Breast epithelium (tissue), 4 donors: ENCODE measurements at regions of chr11 and their contacts with region 1.

Region 1: GRCh38 chr11:29656597-29656996 is 360.2 kb downstream of the KCNA4 start:
- DNase-seq: no peak
- H3K4me3 ChIP-seq: no peak overlapping the region
- H3K27ac ChIP-seq: no peak overlapping the region
- H3K4me1 ChIP-seq: no peaks in the 10 kb centered on the region
- H3K27me3 ChIP-seq: no peaks in the 10 kb centered on the region
- CTCF ChIP-seq: no peak
- POLR2A ChIP-seq: no peak

Region 2: DNA sequence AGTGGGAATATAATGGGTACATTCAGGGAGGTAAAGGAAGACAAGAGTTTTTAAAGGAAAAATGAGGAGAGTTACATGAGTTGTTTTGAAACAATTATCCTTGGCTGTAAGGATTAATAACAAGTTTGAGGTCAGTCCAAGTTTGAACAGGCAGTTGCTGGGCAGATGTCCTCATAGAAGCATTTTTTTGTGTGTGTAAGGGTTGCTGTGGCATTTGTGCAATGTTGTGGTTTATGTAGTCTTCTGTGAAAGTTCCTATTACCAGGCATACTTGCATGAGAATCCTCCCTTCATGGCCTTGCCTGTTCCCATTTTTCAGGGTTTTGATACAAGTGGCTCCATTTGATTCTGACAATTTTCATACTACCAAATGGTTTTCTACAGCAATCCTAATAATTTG is 40.0 kb before region 1 on chr11:
- intact Hi-C with region 1: loop called (anchors 2 kb)
- DNase-seq: no peak
- H3K4me3 ChIP-seq: no peak overlapping the region
- H3K27ac ChIP-seq: no peak overlapping the region
- H3K4me1 ChIP-seq: no peaks in the 10 kb centered on the region
- H3K27me3 ChIP-seq: no peaks in the 10 kb centered on the region
- CTCF ChIP-seq: no peak
- POLR2A ChIP-seq: no peak

Region 3: GRCh38 chr11:30089921-30090320 is 433.3 kb after region 1 on chr11:
- intact Hi-C with region 1: loop called (anchors 10 kb)
- DNase-seq: no peak
- H3K4me3 ChIP-seq: no peak overlapping the region
- H3K27ac ChIP-seq: no peak overlapping the region
- H3K4me1 ChIP-seq: no peaks in the 10 kb centered on the region
- H3K27me3 ChIP-seq: no peaks in the 10 kb centered on the region
- CTCF ChIP-seq: no peak
- POLR2A ChIP-seq: no peak